ENCODE measurements at regions of chr19 and their contacts with region 1.

Region 1: GRCh38 chr19:36850559-36851442 is at the start of gene ZNF345:
- DNase-seq: peak; percentile 81
- H3K4me3 Mint-ChIP-seq: no peak within 1 kb of the TSS
- H3K27ac Mint-ChIP-seq: no peak within 1 kb of the TSS
- H3K4me1 Mint-ChIP-seq: peaks cover 6% of the 10 kb centered on the region
- H3K27me3 Mint-ChIP-seq: no peaks in the 10 kb centered on the region
- total RNA-seq, gene ZNF345: 3.7 and 4.4 TPM in 2 replicates

Region 2: GRCh38 chr19:36528194-36528920 is 322.4 kb before region 1 on chr19 and contains the start of gene ZNF260:
- intact Hi-C with region 1: loop called (anchors 1 kb)
- DNase-seq: peak; percentile 89
- H3K4me3 Mint-ChIP-seq: peak within 1 kb of the TSS; percentile 95
- H3K27ac Mint-ChIP-seq: peak within 1 kb of the TSS; percentile 93
- H3K4me1 Mint-ChIP-seq: peaks cover 22% of the 10 kb centered on the region
- H3K27me3 Mint-ChIP-seq: peaks cover 1% of the 10 kb centered on the region
- total RNA-seq, gene ZNF260: 7.5 and 8.9 TPM in 2 replicates

Region 3: GRCh38 chr19:36687214-36688056 is 163.4 kb before region 1 on chr19 and contains the start of gene ZNF567:
- intact Hi-C with region 1: loop called (anchors 1 kb)
- DNase-seq: peak; percentile 97
- H3K4me3 Mint-ChIP-seq: peak within 1 kb of the TSS; percentile 95
- H3K27ac Mint-ChIP-seq: peak within 1 kb of the TSS; percentile 91
- H3K4me1 Mint-ChIP-seq: peaks cover 24% of the 10 kb centered on the region
- H3K27me3 Mint-ChIP-seq: peaks cover 2% of the 10 kb centered on the region
- total RNA-seq, gene ZNF567: 5.8 and 8.5 TPM in 2 replicates

Region 4: DNA sequence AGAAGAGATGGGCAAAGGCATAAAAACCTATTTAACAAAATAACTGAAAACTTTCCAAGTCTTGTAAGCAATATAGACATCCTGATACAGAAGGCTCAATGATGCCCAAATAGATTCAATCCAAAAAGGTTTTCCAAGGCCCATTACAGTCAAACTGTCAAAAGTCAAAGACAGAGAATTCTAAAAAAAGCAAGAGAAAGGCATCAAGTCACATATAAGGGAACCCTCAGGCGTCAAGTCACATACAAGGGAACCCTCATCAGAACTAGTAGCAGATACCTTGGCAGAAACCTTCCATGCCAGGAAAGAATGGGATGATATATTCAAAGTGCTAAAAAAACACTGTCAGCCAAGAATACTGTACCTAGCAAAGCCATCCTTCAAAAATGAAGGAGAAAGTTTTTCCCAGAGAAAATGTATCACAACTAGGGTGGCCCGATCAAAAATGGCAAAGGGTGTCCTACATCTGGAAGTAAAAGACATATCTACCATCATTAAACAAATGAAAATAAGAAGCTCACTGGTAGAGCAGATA is 44.1 kb after region 1 on chr19:
- intact Hi-C with region 1: no loop called
- DNase-seq: no peak
- H3K4me3 Mint-ChIP-seq: no peak overlapping the region
- H3K27ac Mint-ChIP-seq: no peak overlapping the region
- H3K4me1 Mint-ChIP-seq: no peaks in the 10 kb centered on the region
- H3K27me3 Mint-ChIP-seq: no peaks in the 10 kb centered on the region

Region 5: GRCh38 chr19:36915992-36916830 is 65.4 kb after region 1 on chr19 and contains the starts of genes ZNF568 and ZNF829:
- intact Hi-C with region 1: loop called (anchors 1 kb)
- DNase-seq: peak; percentile 92
- H3K4me3 Mint-ChIP-seq: peak within 1 kb of the TSS; percentile 92
- H3K27ac Mint-ChIP-seq: peak within 1 kb of the TSS; percentile 95
- H3K4me1 Mint-ChIP-seq: peaks cover 21% of the 10 kb centered on the region
- H3K27me3 Mint-ChIP-seq: no peaks in the 10 kb centered on the region
- total RNA-seq, gene ZNF568: 4.4 and 4.9 TPM in 2 replicates
- total RNA-seq, gene ZNF829: 5.3 and 5.4 TPM in 2 replicates

Region 6: DNA sequence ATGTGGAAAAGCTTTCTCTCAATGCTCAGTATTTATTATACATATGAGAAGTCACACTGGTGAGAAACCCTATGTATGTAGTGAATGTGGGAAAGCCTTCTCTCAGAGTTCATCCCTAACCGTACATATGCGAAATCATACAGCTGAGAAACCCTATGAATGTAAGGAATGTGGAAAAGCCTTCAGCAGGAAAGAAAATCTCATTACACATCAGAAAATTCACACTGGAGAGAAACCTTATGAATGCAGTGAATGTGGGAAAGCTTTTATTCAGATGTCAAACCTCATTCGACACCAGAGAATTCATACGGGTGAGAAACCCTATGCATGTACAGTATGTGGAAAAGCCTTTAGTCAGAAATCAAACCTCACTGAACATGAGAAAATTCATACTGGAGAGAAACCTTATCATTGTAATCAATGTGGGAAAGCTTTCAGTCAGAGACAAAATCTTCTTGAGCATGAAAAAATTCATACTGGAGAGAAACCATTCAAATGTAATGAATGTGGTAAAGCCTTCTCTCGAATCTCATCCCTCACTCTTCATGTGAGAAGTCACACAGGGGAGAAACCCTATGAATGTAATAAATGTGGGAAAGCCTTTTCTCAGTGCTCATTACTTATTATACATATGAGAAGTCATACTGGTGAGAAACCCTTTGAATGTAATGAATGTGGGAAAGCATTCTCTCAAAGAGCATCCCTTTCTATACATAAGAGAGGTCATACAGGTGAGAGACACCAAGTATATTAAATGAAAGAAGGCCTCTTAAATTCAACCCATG is 99.7 kb after region 1 on chr19:
- intact Hi-C with region 1: no loop called
- DNase-seq: no peak
- H3K4me3 Mint-ChIP-seq: no peak overlapping the region
- H3K27ac Mint-ChIP-seq: no peak overlapping the region
- H3K4me1 Mint-ChIP-seq: no peaks in the 10 kb centered on the region
- H3K27me3 Mint-ChIP-seq: no peaks in the 10 kb centered on the region

Region 7: GRCh38 chr19:37217855-37218591 is 367.2 kb after region 1 on chr19 and contains the start of gene ZNF383:
- intact Hi-C with region 1: loop called (anchors 1 kb)
- DNase-seq: peak; percentile 78
- H3K4me3 Mint-ChIP-seq: peak within 1 kb of the TSS; percentile 96
- H3K27ac Mint-ChIP-seq: peak within 1 kb of the TSS; percentile 90
- H3K4me1 Mint-ChIP-seq: peaks cover 20% of the 10 kb centered on the region
- H3K27me3 Mint-ChIP-seq: no peaks in the 10 kb centered on the region
- total RNA-seq, gene ZNF383: 6.3 TPM in 2 replicates

Region 8: GRCh38 chr19:37655689-37656371 is 805.0 kb after region 1 on chr19:
- intact Hi-C with region 1: loop called (anchors 1 kb)
- DNase-seq: peak; percentile 83
- H3K4me3 Mint-ChIP-seq: peak overlapping the region; percentile 90
- H3K27ac Mint-ChIP-seq: peak overlapping the region; percentile 93
- H3K4me1 Mint-ChIP-seq: peaks cover 28% of the 10 kb centered on the region
- H3K27me3 Mint-ChIP-seq: no peaks in the 10 kb centered on the region

Measured in activated T-helper 1 cell treated with anti-CD3 and anti-CD28 coated beads, Interleukin-12 subunit alpha, Interleukin-12 subunit beta, Interleukin-2, Interleukin-4 antibody, amounts not matched to agents 30 ng/mL and 10 ng/mL and 1 ng/mL, durations not matched to agents 14 hours and 24 hours and 36 hours (primary cell).